ENCODE measurements at regions of chr6 and their contacts with region 1.

Region 1: DNA sequence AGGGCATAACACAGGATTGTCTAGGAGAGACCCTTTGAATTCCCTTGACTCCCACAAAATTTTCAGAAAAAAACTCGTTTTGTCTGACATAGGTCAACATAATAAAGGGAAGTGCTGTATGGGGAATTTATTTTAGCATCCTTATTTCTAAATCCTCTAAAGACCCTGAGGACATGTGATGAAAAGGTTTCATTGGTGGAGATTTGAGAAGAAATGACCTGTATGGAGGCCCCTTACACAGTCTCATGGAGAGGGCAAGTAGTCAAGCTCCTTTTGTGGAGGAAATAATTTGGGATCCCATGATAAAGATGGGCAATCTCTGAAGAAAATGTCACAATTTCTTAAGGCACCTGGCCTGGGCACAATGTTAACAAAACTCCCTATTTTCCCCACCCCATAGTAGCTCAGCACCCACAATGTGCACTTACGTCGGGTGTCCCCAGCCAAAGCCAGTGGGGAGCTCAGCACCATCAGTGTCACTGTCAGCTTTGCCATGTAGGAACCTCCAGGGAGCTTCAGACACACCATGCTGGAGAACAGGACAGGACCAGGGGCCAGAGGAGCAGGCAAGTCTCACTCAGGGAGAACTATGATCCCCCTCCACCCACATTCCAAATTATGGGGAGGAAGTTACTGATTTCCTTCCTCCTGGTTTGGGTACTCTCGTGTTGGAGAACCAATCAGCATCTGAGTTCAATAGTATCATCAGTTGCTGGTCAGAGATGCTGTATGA is at the start of gene HLA-DRB5:
- DNase-seq: peak; percentile 85
- ATAC-seq: peak; percentile 74
- H3K4me3 ChIP-seq: peak within 1 kb of the TSS; percentile 56 to 74 (median 62)
- H3K4me3 Mint-ChIP-seq: peak within 1 kb of the TSS; percentile 94
- H3K27ac ChIP-seq: peak within 1 kb of the TSS; percentile 79 to 94
- H3K27ac Mint-ChIP-seq: peak within 1 kb of the TSS; percentile 100
- H3K4me1 ChIP-seq: peaks cover 4 to 10% of the 10 kb centered on the region in 2 donors
- H3K4me1 Mint-ChIP-seq: peaks cover 27% of the 10 kb centered on the region
- H3K27me3 ChIP-seq: no peaks in the 10 kb centered on the region
- H3K27me3 Mint-ChIP-seq: no peaks in the 10 kb centered on the region
- CTCF ChIP-seq: no peak
- total RNA-seq, gene HLA-DRB5: 174 and 184 TPM in 2 replicates

Region 2: DNA sequence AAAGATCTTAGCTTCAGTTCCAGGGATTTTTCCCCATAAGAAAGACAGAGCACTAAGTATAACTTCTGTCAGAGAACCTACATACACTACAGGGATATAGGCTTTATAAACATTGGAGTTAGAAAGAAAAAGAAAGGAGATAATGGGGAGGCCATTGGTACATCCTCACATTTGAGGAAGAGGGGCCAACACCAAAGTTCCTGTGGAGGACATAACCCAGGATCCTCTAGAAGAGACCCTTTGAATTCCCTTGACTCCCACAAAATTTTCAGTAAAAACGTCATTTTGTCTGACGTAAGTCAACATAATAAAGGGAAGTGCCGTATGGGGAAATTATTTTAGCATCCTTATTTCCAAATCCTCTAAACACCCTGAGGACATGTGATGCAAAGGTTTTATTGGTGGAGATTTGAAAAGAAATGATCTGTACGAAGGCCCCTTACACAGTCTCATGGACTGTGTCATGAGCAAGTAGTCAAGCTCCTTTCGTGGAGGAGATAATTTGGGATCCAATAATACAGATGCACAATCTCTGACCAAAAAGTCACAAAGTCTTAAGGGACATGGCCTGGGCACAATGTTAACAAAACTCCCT is 57.0 kb before region 1 on chr6:
- CTCF ChIA-PET with region 1: no interaction called
- POLR2A ChIA-PET with region 1: interaction called, 3 read pairs
- intact Hi-C with region 1: loop called (anchors 2 kb)
- DNase-seq: peak; percentile 69
- ATAC-seq: peak; percentile 11
- H3K4me3 ChIP-seq: peak overlapping the region in 4 of 5 experiments; percentile 28 to 52 (median 48)
- H3K4me3 Mint-ChIP-seq: peak overlapping the region; percentile 96
- H3K27ac ChIP-seq: peak overlapping the region; percentile 99 to 100
- H3K27ac Mint-ChIP-seq: peak overlapping the region; percentile 100
- H3K4me1 ChIP-seq: peaks cover 29 to 30% of the 10 kb centered on the region in 2 donors
- H3K4me1 Mint-ChIP-seq: peaks cover 40% of the 10 kb centered on the region
- H3K27me3 ChIP-seq: no peaks in the 10 kb centered on the region
- H3K27me3 Mint-ChIP-seq: no peaks in the 10 kb centered on the region
- CTCF ChIP-seq: no peak

Region 3: GRCh38 chr6:32483968-32484636 is 45.8 kb before region 1 on chr6:
- CTCF ChIA-PET with region 1: no interaction called
- POLR2A ChIA-PET with region 1: no interaction called
- intact Hi-C with region 1: loop called (anchors 2 kb)
- DNase-seq: no peak
- ATAC-seq: no peak
- H3K4me3 ChIP-seq: no peak overlapping the region
- H3K4me3 Mint-ChIP-seq: no peak overlapping the region
- H3K27ac ChIP-seq: no peak overlapping the region
- H3K27ac Mint-ChIP-seq: no peak overlapping the region
- H3K4me1 ChIP-seq: peaks cover 4 to 5% of the 10 kb centered on the region in 2 donors
- H3K4me1 Mint-ChIP-seq: peaks cover 29% of the 10 kb centered on the region
- H3K27me3 ChIP-seq: no peaks in the 10 kb centered on the region
- H3K27me3 Mint-ChIP-seq: no peaks in the 10 kb centered on the region
- CTCF ChIP-seq: no peak

Region 4: DNA sequence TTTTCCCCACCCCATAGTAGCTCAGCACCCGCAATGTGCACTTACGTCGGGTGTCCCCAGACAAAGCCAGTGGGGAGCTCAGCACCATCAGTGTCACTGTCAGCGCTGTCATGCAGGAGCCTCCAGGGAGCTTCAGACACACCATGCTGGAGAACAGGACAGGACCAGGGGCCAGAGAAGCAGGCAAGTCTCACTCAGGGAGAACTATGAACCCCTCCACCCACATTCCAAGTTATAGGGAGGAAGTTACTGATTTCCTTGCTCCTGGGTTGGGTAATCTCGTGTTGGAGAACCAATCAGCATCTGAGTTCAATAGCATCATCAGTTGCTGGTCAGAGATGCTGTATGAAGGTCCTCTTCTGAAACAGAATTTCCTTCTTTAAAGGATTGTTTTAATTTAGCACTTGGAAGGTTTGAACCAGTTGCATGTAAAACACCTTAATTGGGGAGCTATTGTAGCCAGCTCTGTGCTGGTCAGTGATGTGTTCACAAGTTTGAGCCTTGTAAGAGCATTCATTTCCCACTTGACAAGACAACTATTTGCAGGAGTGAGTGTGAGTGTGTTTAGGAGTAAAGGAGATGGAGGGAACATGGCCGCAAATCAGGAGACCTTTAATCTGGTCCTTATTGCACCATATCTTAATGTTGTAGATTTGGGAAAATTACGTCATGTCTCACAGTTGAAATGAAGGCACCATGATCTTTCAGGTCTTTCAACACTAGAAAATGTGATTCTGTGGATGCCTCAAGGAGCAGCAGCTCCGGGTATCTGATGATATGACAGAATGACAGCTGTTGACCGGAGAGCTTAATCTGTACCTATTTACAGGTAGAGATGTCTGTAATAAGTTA is 60.0 kb after region 1 on chr6 and contains the start of gene HLA-DRB1:
- CTCF ChIA-PET with region 1: interaction called, 3 read pairs
- POLR2A ChIA-PET with region 1: interaction called, 55 read pairs
- intact Hi-C with region 1: no loop called
- DNase-seq: peak; percentile 87
- ATAC-seq: peak; percentile 94
- H3K4me3 ChIP-seq: peak within 1 kb of the TSS in 4 of 5 experiments; percentile 52 to 72 (median 62)
- H3K4me3 Mint-ChIP-seq: peak within 1 kb of the TSS; percentile 97
- H3K27ac ChIP-seq: peak within 1 kb of the TSS; percentile 74 to 86
- H3K27ac Mint-ChIP-seq: peak within 1 kb of the TSS; percentile 100
- H3K4me1 ChIP-seq: peaks cover 0 to 13% of the 10 kb centered on the region in 2 donors
- H3K4me1 Mint-ChIP-seq: peaks cover 63% of the 10 kb centered on the region
- H3K27me3 ChIP-seq: no peaks in the 10 kb centered on the region
- H3K27me3 Mint-ChIP-seq: no peaks in the 10 kb centered on the region
- CTCF ChIP-seq: no peak
- total RNA-seq, gene HLA-DRB1: 559 and 584 TPM in 2 replicates

Measured in B cell (primary cell).